ENCODE measurements at regions of chr3 and their contacts with region 1.

Region 1: DNA sequence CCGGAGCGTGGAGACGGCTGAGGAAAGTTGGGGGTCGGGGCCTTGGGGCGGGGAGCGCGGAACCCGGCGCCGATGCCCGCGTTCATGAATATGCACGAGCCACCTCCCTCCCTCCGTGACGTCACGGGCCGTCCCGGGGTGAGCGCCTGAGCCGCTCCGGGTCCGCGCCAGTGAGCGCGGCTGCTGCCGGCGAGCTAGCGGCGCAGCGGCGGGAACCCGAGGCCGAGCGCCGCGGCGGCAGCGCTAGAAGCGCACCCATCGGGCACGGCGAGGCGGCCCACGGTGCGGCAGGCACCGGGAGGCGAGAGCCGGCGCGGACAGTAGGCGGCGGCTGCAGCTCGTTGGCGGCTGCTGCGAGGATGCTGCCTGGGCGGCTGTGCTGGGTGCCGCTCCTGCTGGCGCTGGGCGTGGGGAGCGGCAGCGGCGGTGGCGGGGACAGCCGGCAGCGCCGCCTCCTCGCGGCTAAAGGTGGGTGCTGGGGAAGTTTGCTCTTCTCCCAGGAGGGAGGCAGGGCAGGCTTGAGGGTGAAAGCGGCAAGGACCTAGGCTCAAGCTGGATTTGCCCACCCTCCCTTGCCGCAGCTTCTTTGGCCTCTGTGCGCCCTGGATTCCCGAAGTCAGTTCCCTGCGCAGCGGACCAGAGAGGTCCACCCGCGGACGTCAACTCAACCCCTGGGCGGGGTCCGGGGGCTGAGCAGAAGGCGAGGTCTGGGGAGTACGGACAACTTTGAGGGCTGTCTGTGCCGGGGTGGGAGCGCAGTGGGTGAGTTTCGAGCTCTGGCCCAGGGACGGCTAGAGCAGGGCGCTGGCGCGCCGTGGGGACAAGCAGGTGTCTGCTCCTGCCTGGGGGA is at the start of gene CLSTN2:
- DNase-seq: peak; percentile 64 to 81
- H3K4me3 ChIP-seq: peak within 1 kb of the TSS; percentile 55
- H3K4me3 Mint-ChIP-seq: peak within 1 kb of the TSS; percentile 86
- H3K27ac Mint-ChIP-seq: peak within 1 kb of the TSS; percentile 21
- H3K4me1 ChIP-seq: no peaks in the 10 kb centered on the region
- H3K4me1 Mint-ChIP-seq: peaks cover 8% of the 10 kb centered on the region
- H3K27me3 ChIP-seq: no peaks in the 10 kb centered on the region
- H3K27me3 Mint-ChIP-seq: peaks cover 9% of the 10 kb centered on the region
- CTCF ChIP-seq: no peak
- total RNA-seq, gene CLSTN2: 20.1 and 26.1 TPM in 2 replicates

Region 2: DNA sequence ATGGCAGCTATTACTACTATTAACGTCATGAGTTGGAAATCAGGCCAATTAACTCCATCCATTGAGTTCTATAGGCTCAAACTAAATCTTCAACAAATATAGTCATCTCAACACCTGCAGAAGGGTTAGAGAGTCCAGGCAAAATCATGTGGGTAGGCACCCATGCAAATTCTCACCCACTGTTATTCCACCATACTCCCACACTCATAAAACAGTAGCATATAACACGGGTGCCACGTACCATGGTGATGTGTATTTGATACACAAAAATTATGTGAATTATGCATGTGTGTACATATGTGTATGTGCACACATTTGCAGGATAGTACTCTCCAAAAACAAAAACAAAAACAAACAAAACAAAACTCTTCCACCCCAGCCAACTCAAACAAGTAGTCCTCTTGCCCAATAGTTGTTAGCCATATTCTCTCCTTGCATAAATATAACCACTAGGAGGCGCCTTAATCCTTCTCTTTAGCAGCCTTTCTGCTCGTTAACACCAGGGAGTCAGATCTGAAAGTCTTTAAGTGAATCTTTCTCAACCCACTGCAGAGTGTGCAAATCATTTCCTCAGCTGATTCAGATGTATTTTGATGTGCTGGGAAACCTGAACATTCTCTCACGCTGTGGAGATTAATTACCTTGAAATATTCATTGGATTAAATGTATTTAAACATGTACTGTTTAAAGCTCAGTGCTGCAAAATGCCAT is 507.8 kb before region 1 on chr3:
- CTCF ChIA-PET with region 1: no interaction called
- POLR2A ChIA-PET with region 1: no interaction called
- intact Hi-C with region 1: loop called (anchors 2 kb)
- DNase-seq: peak in 1 of 2 experiments; percentile 71
- H3K4me3 ChIP-seq: no peak overlapping the region
- H3K4me3 Mint-ChIP-seq: no peak overlapping the region
- H3K27ac Mint-ChIP-seq: no peak overlapping the region
- H3K4me1 ChIP-seq: no peaks in the 10 kb centered on the region
- H3K4me1 Mint-ChIP-seq: no peaks in the 10 kb centered on the region
- H3K27me3 ChIP-seq: no peaks in the 10 kb centered on the region
- H3K27me3 Mint-ChIP-seq: no peaks in the 10 kb centered on the region
- CTCF ChIP-seq: peak; percentile 68 to 76

Region 3: GRCh38 chr3:139533781-139534443 is 401.3 kb before region 1 on chr3:
- CTCF ChIA-PET with region 1: no interaction called
- POLR2A ChIA-PET with region 1: no interaction called
- intact Hi-C with region 1: no loop called
- DNase-seq: no peak
- H3K4me3 ChIP-seq: no peak overlapping the region
- H3K4me3 Mint-ChIP-seq: no peak overlapping the region
- H3K27ac Mint-ChIP-seq: no peak overlapping the region
- H3K4me1 ChIP-seq: peaks cover 10% of the 10 kb centered on the region
- H3K4me1 Mint-ChIP-seq: peaks cover 17% of the 10 kb centered on the region
- H3K27me3 ChIP-seq: no peaks in the 10 kb centered on the region
- H3K27me3 Mint-ChIP-seq: no peaks in the 10 kb centered on the region
- CTCF ChIP-seq: no peak

Region 4: DNA sequence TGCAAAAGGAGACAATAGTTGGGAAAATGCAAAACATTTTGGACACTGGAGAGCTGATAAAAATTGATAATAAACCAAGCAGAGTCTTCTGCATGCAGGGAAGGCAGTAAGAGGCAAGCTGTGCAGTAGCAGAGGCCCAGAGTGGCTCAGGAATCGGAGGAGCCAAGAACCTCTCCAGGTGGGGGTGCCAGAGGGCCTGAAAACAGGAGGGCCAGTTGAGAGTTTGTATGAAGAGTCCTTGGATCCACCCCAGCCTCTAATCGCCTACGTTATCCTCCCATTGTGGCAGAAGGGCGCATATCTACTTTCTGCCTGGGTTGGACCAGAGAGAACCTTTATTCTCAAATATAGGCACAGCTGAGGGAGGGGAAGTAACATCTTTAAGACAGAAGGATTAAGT is 346.8 kb before region 1 on chr3:
- CTCF ChIA-PET with region 1: no interaction called
- POLR2A ChIA-PET with region 1: no interaction called
- intact Hi-C with region 1: loop called (anchors 1 kb)
- DNase-seq: peak; percentile 63 to 71
- H3K4me3 ChIP-seq: no peak overlapping the region
- H3K4me3 Mint-ChIP-seq: no peak overlapping the region
- H3K27ac Mint-ChIP-seq: no peak overlapping the region
- H3K4me1 ChIP-seq: no peaks in the 10 kb centered on the region; the same call in 1 of the 2 replicates
- H3K4me1 Mint-ChIP-seq: peaks cover 12% of the 10 kb centered on the region
- H3K27me3 ChIP-seq: no peaks in the 10 kb centered on the region
- H3K27me3 Mint-ChIP-seq: no peaks in the 10 kb centered on the region
- CTCF ChIP-seq: peak; percentile 36 to 58

Region 5: GRCh38 chr3:139718415-139718814 is 216.8 kb before region 1 on chr3:
- CTCF ChIA-PET with region 1: interaction called, 7 read pairs
- POLR2A ChIA-PET with region 1: no interaction called
- intact Hi-C with region 1: loop called (anchors 2 kb)
- DNase-seq: peak; percentile 60 to 61
- H3K4me3 ChIP-seq: no peak overlapping the region
- H3K4me3 Mint-ChIP-seq: no peak overlapping the region
- H3K27ac Mint-ChIP-seq: no peak overlapping the region
- H3K4me1 ChIP-seq: peaks cover 10% of the 10 kb centered on the region; the same call in 1 of the 2 replicates
- H3K4me1 Mint-ChIP-seq: no peaks in the 10 kb centered on the region
- H3K27me3 ChIP-seq: no peaks in the 10 kb centered on the region
- H3K27me3 Mint-ChIP-seq: peaks cover 4% of the 10 kb centered on the region
- CTCF ChIP-seq: peak; percentile 49 to 57

Region 6: GRCh38 chr3:140051019-140051957 is 116.0 kb after region 1 on chr3:
- CTCF ChIA-PET with region 1: interaction called, 5 read pairs
- POLR2A ChIA-PET with region 1: interaction called, 3 read pairs
- intact Hi-C with region 1: loop called (anchors 2 kb)
- DNase-seq: peak in 1 of 2 experiments; percentile 34
- H3K4me3 ChIP-seq: no peak overlapping the region
- H3K4me3 Mint-ChIP-seq: no peak overlapping the region
- H3K27ac Mint-ChIP-seq: peak overlapping the region; percentile 50
- H3K4me1 ChIP-seq: peaks cover 41% of the 10 kb centered on the region
- H3K4me1 Mint-ChIP-seq: peaks cover 34% of the 10 kb centered on the region
- H3K27me3 ChIP-seq: no peaks in the 10 kb centered on the region
- H3K27me3 Mint-ChIP-seq: no peaks in the 10 kb centered on the region
- CTCF ChIP-seq: peak in 1 of 2 experiments; percentile 54

Region 7: GRCh38 chr3:140386357-140387100 is 451.3 kb after region 1 on chr3:
- CTCF ChIA-PET with region 1: no interaction called
- POLR2A ChIA-PET with region 1: no interaction called
- intact Hi-C with region 1: no loop called
- DNase-seq: no peak
- H3K4me3 ChIP-seq: no peak overlapping the region
- H3K4me3 Mint-ChIP-seq: no peak overlapping the region
- H3K27ac Mint-ChIP-seq: no peak overlapping the region
- H3K4me1 ChIP-seq: no peaks in the 10 kb centered on the region
- H3K4me1 Mint-ChIP-seq: no peaks in the 10 kb centered on the region
- H3K27me3 ChIP-seq: no peaks in the 10 kb centered on the region
- H3K27me3 Mint-ChIP-seq: no peaks in the 10 kb centered on the region
- CTCF ChIP-seq: no peak

Region 8: GRCh38 chr3:140736863-140737460 is 801.7 kb after region 1 on chr3:
- CTCF ChIA-PET with region 1: no interaction called
- POLR2A ChIA-PET with region 1: no interaction called
- intact Hi-C with region 1: loop called (anchors 1 kb)
- DNase-seq: peak; percentile 59 to 71
- H3K4me3 ChIP-seq: no peak overlapping the region
- H3K4me3 Mint-ChIP-seq: no peak overlapping the region
- H3K27ac Mint-ChIP-seq: no peak overlapping the region
- H3K4me1 ChIP-seq: no peaks in the 10 kb centered on the region
- H3K4me1 Mint-ChIP-seq: peaks cover 7% of the 10 kb centered on the region
- H3K27me3 ChIP-seq: no peaks in the 10 kb centered on the region
- H3K27me3 Mint-ChIP-seq: no peaks in the 10 kb centered on the region
- CTCF ChIP-seq: peak; percentile 63 to 68

Region 9: DNA sequence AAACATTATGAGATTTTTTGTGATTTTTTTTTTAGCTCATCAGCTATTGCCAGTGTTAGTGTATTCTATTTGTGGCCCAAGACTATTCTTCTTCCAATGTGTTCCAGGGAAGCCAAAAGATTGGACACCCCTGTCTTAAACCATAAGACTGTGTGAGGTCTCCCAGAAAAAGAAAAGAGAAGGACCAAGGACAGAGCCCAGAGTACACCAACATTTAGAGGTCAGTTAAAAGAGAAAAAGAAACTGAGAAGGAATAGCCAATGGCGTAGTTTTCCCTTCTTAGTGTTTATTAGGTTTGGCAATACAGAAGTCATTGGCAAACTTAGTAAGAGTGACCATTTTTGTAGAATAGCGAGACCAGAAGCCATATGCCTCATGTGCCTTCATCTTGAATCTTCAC is 970.3 kb after region 1 on chr3:
- CTCF ChIA-PET with region 1: no interaction called
- POLR2A ChIA-PET with region 1: interaction called, 11 read pairs
- intact Hi-C with region 1: no loop called
- DNase-seq: no peak
- H3K4me3 ChIP-seq: no peak overlapping the region
- H3K4me3 Mint-ChIP-seq: no peak overlapping the region
- H3K27ac Mint-ChIP-seq: no peak overlapping the region
- H3K4me1 ChIP-seq: no peaks in the 10 kb centered on the region
- H3K4me1 Mint-ChIP-seq: no peaks in the 10 kb centered on the region
- H3K27me3 ChIP-seq: no peaks in the 10 kb centered on the region
- H3K27me3 Mint-ChIP-seq: peaks cover 3% of the 10 kb centered on the region
- CTCF ChIP-seq: no peak

Measured in Caco-2 (cell line).